ENCODE measurements at regions of chr3 and their contacts with region 1.

Region 1: DNA sequence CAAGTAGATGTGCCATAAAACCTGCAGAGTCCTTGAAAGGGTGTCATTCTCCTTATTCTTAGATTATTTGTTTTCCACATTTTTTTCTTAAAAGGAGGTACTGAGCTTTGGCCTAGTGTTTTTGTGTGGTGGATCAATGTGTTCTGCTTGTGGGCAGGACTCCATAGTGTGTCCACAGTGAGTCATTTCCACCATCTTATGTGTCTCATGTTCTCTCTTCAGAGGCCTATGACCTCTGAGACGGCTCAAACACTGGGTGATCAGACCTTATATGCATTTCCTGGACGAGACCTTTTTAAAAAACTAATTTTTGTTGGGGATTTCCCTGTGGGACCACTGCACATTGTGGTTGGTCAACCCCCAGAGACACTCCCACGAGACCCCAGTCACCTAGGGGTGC is 93.4 kb downstream of the CHCHD4 start:
- DNase-seq: no peak
- H3K4me3 ChIP-seq: no peak overlapping the region
- H3K27ac ChIP-seq: no peak overlapping the region
- H3K4me1 ChIP-seq: no peaks in the 10 kb centered on the region
- H3K27me3 ChIP-seq: no peaks in the 10 kb centered on the region
- CTCF ChIP-seq: no peak
- POLR2A ChIP-seq: no peak

Region 2: GRCh38 chr3:14976317-14976716 is 945.0 kb after region 1 on chr3:
- intact Hi-C with region 1: loop called (anchors 5 kb)
- DNase-seq: no peak
- H3K4me3 ChIP-seq: no peak overlapping the region
- H3K27ac ChIP-seq: no peak overlapping the region
- H3K4me1 ChIP-seq: no peaks in the 10 kb centered on the region
- H3K27me3 ChIP-seq: no peaks in the 10 kb centered on the region
- CTCF ChIP-seq: no peak
- POLR2A ChIP-seq: no peak

Measured in breast epithelium (tissue), 4 donors.